ENCODE measurements at regions of chr15 and their contacts with region 1.

Region 1: GRCh38 chr15:91852741-91853510 is 582 bp upstream of the SLCO3A1 start:
- DNase-seq: peak; percentile 93 to 97 (median 95)
- H3K4me3 ChIP-seq: peak overlapping the region; percentile 64 to 99 (median 79)
- H3K4me3 Mint-ChIP-seq: peak overlapping the region; percentile 88 to 90
- H3K27ac ChIP-seq: peak overlapping the region; percentile 94 to 99
- H3K27ac Mint-ChIP-seq: peak overlapping the region; percentile 94 to 99 (median 98)
- H3K4me1 ChIP-seq: peaks cover 67% of the 10 kb centered on the region in 2 donors
- H3K4me1 Mint-ChIP-seq: peaks cover 63% of the 10 kb centered on the region
- H3K27me3 ChIP-seq: no peaks in the 10 kb centered on the region
- H3K27me3 Mint-ChIP-seq: peaks cover 0 to 3% (median 0%) of the 10 kb centered on the region in 3 donors
- CTCF ChIP-seq: peak; percentile 92

Region 2: GRCh38 chr15:90915808-90916440 is 937.0 kb before region 1 on chr15:
- intact Hi-C with region 1: loop called in 1 of 2 experiments (anchors 10 kb)
- DNase-seq: peak; percentile 95 to 98 (median 98)
- H3K4me3 ChIP-seq: peak overlapping the region; percentile 3 to 76 (median 40)
- H3K4me3 Mint-ChIP-seq: peak overlapping the region; percentile 81 to 93
- H3K27ac ChIP-seq: peak overlapping the region; percentile 83 to 93
- H3K27ac Mint-ChIP-seq: peak overlapping the region; percentile 95 to 98 (median 97)
- H3K4me1 ChIP-seq: peaks cover 49 to 55% of the 10 kb centered on the region in 2 donors
- H3K4me1 Mint-ChIP-seq: peaks cover 55% of the 10 kb centered on the region
- H3K27me3 ChIP-seq: no peaks in the 10 kb centered on the region
- H3K27me3 Mint-ChIP-seq: peaks cover 0 to 2% (median 1%) of the 10 kb centered on the region in 3 donors
- CTCF ChIP-seq: no peak

Region 3: DNA sequence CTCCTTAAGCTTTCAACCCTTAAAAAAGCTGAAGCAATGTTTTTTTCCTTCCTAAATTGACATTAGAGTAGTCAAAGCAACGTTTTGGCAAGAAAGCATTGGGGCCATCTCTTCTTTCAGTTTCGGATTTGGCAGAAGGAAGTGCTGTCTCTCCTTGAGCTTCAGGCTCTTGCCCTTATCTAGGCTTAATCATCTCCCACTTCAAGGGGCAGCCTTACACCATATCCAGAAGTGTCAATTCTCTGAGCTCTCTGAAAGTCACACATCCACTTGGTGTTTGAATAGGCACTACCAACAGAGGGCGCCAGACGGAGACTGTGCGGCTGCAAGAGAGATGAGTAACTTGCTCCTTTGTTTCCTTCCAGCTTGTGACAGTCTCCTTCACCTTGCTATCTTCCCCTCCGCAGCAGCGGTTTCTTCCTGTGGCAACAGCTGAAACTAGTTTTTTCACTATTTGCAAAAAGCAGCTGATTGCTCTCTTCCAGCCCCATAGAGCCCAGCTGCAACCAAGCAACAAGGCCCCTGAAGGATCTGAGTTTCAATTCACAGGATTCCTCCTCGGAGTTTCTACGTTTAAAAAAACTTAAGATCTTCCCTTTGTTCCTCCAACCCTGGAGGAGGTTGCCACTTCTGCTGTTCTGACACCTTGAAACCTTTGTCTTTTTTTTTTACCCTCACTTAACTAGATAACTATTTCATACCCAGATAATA is 146.4 kb before region 1 on chr15:
- intact Hi-C with region 1: loop called in 1 of 2 experiments (anchors 5 kb)
- DNase-seq: peak; percentile 72 to 85 (median 74)
- H3K4me3 ChIP-seq: no peak overlapping the region
- H3K4me3 Mint-ChIP-seq: peak overlapping the region; percentile 16 to 75
- H3K27ac ChIP-seq: peak overlapping the region in 1 of 2 donors; percentile 3
- H3K27ac Mint-ChIP-seq: peak overlapping the region in 5 of 7 donors; percentile 20 to 64 (median 50)
- H3K4me1 ChIP-seq: peaks cover 13 to 19% of the 10 kb centered on the region in 2 donors
- H3K4me1 Mint-ChIP-seq: peaks cover 22% of the 10 kb centered on the region
- H3K27me3 ChIP-seq: peaks cover 0 to 3% of the 10 kb centered on the region in 2 donors
- H3K27me3 Mint-ChIP-seq: peaks cover 6 to 7% (median 7%) of the 10 kb centered on the region in 3 donors
- CTCF ChIP-seq: peak; percentile 95

Region 4: GRCh38 chr15:91921188-91921842 is 68.4 kb after region 1 on chr15:
- intact Hi-C with region 1: loop called in 1 of 2 experiments (anchors 5 kb)
- DNase-seq: peak; percentile 88 to 94 (median 94)
- H3K4me3 ChIP-seq: peak overlapping the region in 1 of 3 experiments; percentile 37
- H3K4me3 Mint-ChIP-seq: peak overlapping the region; percentile 68 to 77
- H3K27ac ChIP-seq: peak overlapping the region; percentile 91 to 97
- H3K27ac Mint-ChIP-seq: peak overlapping the region; percentile 95 to 100 (median 99)
- H3K4me1 ChIP-seq: peaks cover 21 to 23% of the 10 kb centered on the region in 2 donors
- H3K4me1 Mint-ChIP-seq: peaks cover 42% of the 10 kb centered on the region
- H3K27me3 ChIP-seq: no peaks in the 10 kb centered on the region
- H3K27me3 Mint-ChIP-seq: no peaks in the 10 kb centered on the region
- CTCF ChIP-seq: no peak

Region 5: GRCh38 chr15:91942676-91943576 is 90.0 kb after region 1 on chr15:
- intact Hi-C with region 1: loop called in 1 of 2 experiments (anchors 10 kb)
- DNase-seq: peak; percentile 96 to 99 (median 99)
- H3K4me3 ChIP-seq: peak overlapping the region in 1 of 3 experiments; percentile 62
- H3K4me3 Mint-ChIP-seq: peak overlapping the region; percentile 56 to 86
- H3K27ac ChIP-seq: peak overlapping the region; percentile 93 to 95
- H3K27ac Mint-ChIP-seq: peak overlapping the region; percentile 93 to 99 (median 98)
- H3K4me1 ChIP-seq: peaks cover 85 to 96% of the 10 kb centered on the region in 2 donors
- H3K4me1 Mint-ChIP-seq: peaks cover 92% of the 10 kb centered on the region
- H3K27me3 ChIP-seq: no peaks in the 10 kb centered on the region
- H3K27me3 Mint-ChIP-seq: peaks cover 0 to 2% (median 0%) of the 10 kb centered on the region in 3 donors
- CTCF ChIP-seq: no peak

Region 6: DNA sequence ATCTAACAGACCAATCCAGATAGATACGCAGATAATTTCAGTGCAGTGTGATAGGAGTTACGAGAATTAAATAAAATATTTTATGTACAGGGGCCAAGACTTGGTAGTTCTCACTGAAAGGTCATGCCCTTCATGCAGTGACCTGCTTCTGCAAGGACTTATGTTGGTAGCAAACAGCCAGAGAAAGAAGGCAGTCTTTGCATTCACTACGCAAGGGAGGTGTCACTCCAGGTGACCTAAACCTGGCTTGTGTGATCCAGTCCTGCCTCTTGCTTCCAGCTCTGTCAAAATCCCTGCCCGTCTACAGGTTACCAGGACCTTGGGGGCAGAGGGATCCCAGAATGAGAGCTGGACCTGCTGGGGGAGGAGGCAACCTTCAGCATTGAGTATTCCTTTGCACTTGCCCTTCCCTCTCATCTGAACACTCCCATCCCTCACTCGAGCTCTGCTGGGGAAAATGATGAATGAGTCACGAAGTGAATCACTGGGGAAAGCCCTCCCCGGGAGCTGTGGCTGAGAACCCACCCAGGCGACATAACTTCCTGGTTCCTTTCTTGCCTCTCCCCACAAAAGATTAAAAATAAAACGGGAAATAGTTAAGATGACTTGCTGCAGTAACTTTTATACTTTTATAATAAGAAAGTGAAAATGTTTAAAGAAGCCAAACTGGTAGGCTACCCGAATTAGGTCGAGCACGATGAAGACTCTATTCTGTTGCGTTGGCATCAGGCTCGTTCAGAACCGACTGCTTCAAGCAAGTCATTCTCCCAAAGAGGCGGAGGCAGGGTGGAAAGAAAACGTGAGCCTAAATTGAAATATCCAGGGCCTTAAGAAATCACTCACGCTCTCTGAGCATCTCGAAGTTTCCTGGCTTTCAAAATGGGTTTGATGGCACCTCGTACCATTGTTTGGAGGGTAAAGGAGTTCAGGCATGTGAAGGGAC is 216.7 kb after region 1 on chr15:
- intact Hi-C with region 1: loop called (anchors 2 to 5 kb)
- DNase-seq: peak; percentile 92 to 98 (median 95)
- H3K4me3 ChIP-seq: peak overlapping the region; percentile 38 to 82 (median 76)
- H3K4me3 Mint-ChIP-seq: peak overlapping the region; percentile 79 to 89
- H3K27ac ChIP-seq: peak overlapping the region; percentile 79 to 97
- H3K27ac Mint-ChIP-seq: peak overlapping the region; percentile 91 to 99 (median 97)
- H3K4me1 ChIP-seq: peaks cover 56 to 62% of the 10 kb centered on the region in 2 donors
- H3K4me1 Mint-ChIP-seq: peaks cover 70% of the 10 kb centered on the region
- H3K27me3 ChIP-seq: no peaks in the 10 kb centered on the region
- H3K27me3 Mint-ChIP-seq: peaks cover 0 to 3% (median 2%) of the 10 kb centered on the region in 3 donors
- CTCF ChIP-seq: no peak

Measured in CD14-positive monocyte (primary cell).